ENCODE measurements at regions of chr6 and their contacts with region 1.

Region 1: GRCh38 chr6:56902641-56903464 is 52.1 kb upstream of the BEND6 start:
- DNase-seq: no peak
- H3K4me3 Mint-ChIP-seq: no peak overlapping the region
- H3K27ac Mint-ChIP-seq: no peak overlapping the region
- H3K4me1 Mint-ChIP-seq: no peaks in the 10 kb centered on the region
- H3K27me3 Mint-ChIP-seq: peaks cover 13% of the 10 kb centered on the region

Region 2: GRCh38 chr6:56381840-56382251 is 521.0 kb before region 1 on chr6:
- CTCF ChIA-PET with region 1: no interaction called
- POLR2A ChIA-PET with region 1: no interaction called
- intact Hi-C with region 1: no loop called
- DNase-seq: no peak
- H3K4me3 Mint-ChIP-seq: no peak overlapping the region
- H3K27ac Mint-ChIP-seq: no peak overlapping the region
- H3K4me1 Mint-ChIP-seq: no peaks in the 10 kb centered on the region
- H3K27me3 Mint-ChIP-seq: peaks cover 2% of the 10 kb centered on the region

Region 3: GRCh38 chr6:56890683-56891429 is 12.0 kb before region 1 on chr6:
- CTCF ChIA-PET with region 1: interaction called, 54 read pairs
- POLR2A ChIA-PET with region 1: no interaction called
- intact Hi-C with region 1: no loop called
- DNase-seq: peak; percentile 27
- H3K4me3 Mint-ChIP-seq: no peak overlapping the region
- H3K27ac Mint-ChIP-seq: peak overlapping the region; percentile 48
- H3K4me1 Mint-ChIP-seq: peaks cover 25% of the 10 kb centered on the region
- H3K27me3 Mint-ChIP-seq: no peaks in the 10 kb centered on the region

Region 4: GRCh38 chr6:56938649-56939191 is 35.9 kb after region 1 on chr6:
- CTCF ChIA-PET with region 1: interaction called, 10 read pairs
- POLR2A ChIA-PET with region 1: no interaction called
- intact Hi-C with region 1: no loop called
- DNase-seq: peak; percentile 39
- H3K4me3 Mint-ChIP-seq: no peak overlapping the region
- H3K27ac Mint-ChIP-seq: no peak overlapping the region
- H3K4me1 Mint-ChIP-seq: peaks cover 7% of the 10 kb centered on the region
- H3K27me3 Mint-ChIP-seq: peaks cover 5% of the 10 kb centered on the region

Region 5: DNA sequence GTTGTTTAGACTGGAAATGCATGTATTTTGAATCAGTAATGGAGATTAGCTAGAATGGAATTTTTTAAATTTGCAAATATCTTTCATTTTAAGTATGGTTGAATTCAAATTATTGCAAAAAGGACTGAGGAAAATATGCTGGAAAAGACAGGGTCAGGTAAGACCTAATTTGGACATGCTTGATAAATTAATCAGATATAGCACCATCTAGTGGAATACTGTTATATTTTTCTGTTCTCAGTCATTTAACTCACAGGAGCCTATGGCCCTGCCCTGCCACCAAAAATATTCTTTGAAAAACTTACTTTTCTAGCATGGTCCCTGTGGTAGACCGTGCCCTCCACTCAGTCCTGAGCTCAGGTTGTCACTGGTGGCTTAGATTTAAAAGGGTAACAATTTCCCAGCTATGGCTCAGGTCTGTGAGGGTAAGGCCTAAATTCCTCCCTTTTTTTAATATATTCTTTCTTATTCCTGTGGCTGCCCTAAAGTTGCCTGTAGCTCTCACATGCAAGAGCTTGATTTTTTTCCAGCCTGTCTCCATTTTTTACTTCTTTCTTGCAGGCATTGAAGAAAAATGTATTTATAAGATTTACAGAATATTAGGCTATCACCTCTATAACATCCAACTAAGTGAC is 118.3 kb after region 1 on chr6:
- CTCF ChIA-PET with region 1: interaction called, 46 read pairs
- POLR2A ChIA-PET with region 1: no interaction called
- intact Hi-C with region 1: loop called (anchors 1 kb)
- DNase-seq: no peak
- H3K4me3 Mint-ChIP-seq: no peak overlapping the region
- H3K27ac Mint-ChIP-seq: no peak overlapping the region
- H3K4me1 Mint-ChIP-seq: no peaks in the 10 kb centered on the region
- H3K27me3 Mint-ChIP-seq: peaks cover 7% of the 10 kb centered on the region

Region 6: GRCh38 chr6:57085471-57085870 is 182.6 kb after region 1 on chr6:
- CTCF ChIA-PET with region 1: no interaction called
- POLR2A ChIA-PET with region 1: no interaction called
- intact Hi-C with region 1: no loop called
- DNase-seq: no peak
- H3K4me3 Mint-ChIP-seq: no peak overlapping the region
- H3K27ac Mint-ChIP-seq: no peak overlapping the region
- H3K4me1 Mint-ChIP-seq: peaks cover 5% of the 10 kb centered on the region
- H3K27me3 Mint-ChIP-seq: no peaks in the 10 kb centered on the region

Region 7: DNA sequence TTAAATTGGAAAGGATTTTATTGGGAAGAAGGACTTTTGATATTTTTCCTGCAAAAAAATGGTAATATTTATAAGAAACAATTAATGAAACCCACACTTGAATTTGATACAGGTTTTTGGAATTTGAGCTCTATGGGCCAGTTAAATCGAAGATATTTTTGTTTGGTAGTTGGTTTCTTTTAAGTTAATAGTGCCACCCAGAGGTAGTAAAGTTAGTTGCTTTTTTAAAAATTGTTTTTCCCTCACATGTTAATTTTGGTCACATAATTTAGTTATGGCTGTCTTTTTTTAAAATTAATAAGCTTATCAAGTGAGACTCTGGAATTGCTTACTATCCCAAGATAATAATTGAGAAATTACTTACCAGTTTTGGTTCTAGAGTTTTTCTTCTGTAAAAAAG is 421.7 kb after region 1 on chr6:
- CTCF ChIA-PET with region 1: interaction called, 32 read pairs
- POLR2A ChIA-PET with region 1: no interaction called
- intact Hi-C with region 1: no loop called
- DNase-seq: no peak
- H3K4me3 Mint-ChIP-seq: no peak overlapping the region
- H3K27ac Mint-ChIP-seq: no peak overlapping the region
- H3K4me1 Mint-ChIP-seq: peaks cover 17% of the 10 kb centered on the region
- H3K27me3 Mint-ChIP-seq: no peaks in the 10 kb centered on the region

Measured in activated CD4-positive, alpha-beta memory T cell treated with anti-CD3 and anti-CD28 coated beads for 36 hours (primary cell).